Activated CD4-positive, alpha-beta T cell treated with anti-CD3 and anti-CD28 coated beads for 36 hours (primary cell): ENCODE measurements at regions of chr19 and their contacts with region 1.

Region 1: GRCh38 chr19:45584332-45585157 is at the start of gene OPA3:
- DNase-seq: peak; percentile 100
- ATAC-seq: peak; percentile 95
- H3K4me3 Mint-ChIP-seq: peak within 1 kb of the TSS; percentile 87
- H3K27ac Mint-ChIP-seq: peak within 1 kb of the TSS; percentile 93
- H3K4me1 Mint-ChIP-seq: peaks cover 22% of the 10 kb centered on the region
- H3K27me3 Mint-ChIP-seq: peaks cover 2% of the 10 kb centered on the region
- total RNA-seq, gene OPA3: 13.8 to 14.4 TPM

Region 2: GRCh38 chr19:45370410-45371204 is 213.9 kb before region 1 on chr19 and contains the start of gene ERCC2:
- CTCF ChIA-PET with region 1: no interaction called
- POLR2A ChIA-PET with region 1: no interaction called
- intact Hi-C with region 1: loop called in 1 of 2 experiments (anchors 1 kb)
- DNase-seq: peak; percentile 100
- ATAC-seq: peak; percentile 100
- H3K4me3 Mint-ChIP-seq: peak within 1 kb of the TSS; percentile 79
- H3K27ac Mint-ChIP-seq: peak within 1 kb of the TSS; percentile 97
- H3K4me1 Mint-ChIP-seq: peaks cover 8% of the 10 kb centered on the region
- H3K27me3 Mint-ChIP-seq: no peaks in the 10 kb centered on the region
- total RNA-seq, gene ERCC2: 27.5 to 30.4 TPM

Region 3: DNA sequence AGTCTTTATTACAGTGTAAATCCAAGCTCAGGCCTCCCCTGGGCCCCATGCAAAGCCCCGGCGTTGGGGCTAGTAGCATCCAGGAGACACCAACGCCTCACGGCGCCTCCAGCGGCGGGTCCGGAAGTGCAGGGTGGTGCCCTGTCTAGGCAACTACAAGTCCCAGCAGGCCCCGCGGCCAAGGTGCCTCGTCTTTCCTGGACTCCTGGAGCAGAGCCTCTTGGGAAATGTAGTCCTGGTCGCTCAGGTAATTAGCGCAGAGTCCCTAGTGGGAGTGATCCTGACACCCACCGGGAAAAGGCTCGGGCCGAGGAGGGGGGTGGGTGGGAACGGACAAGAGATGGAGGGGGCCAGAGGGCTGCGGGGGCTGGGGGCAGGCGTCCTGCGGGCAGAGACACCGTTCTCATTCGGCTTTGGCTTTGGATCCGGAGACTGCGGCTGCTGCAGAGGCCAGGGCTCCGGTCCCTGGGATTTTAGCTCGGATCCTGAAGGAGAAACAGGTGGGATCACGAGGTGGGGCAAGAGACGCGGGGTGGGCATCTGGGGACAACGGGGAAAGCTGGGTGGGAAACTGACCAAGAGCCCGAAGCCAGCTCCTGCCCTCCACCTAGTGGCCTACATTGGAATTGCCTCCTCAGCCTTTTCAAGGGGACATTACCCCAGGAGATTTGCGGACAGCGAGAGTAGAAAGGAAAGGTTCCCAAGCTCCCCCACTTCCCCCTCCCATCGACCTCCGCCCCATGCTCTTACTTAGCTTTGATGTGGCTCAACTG is 99.1 kb before region 1 on chr19:
- CTCF ChIA-PET with region 1: interaction called, 3 read pairs
- POLR2A ChIA-PET with region 1: no interaction called
- intact Hi-C with region 1: loop called in 1 of 2 experiments (anchors 1 kb)
- DNase-seq: peak; percentile 100
- ATAC-seq: peak; percentile 99
- H3K4me3 Mint-ChIP-seq: peak overlapping the region; percentile 83
- H3K27ac Mint-ChIP-seq: peak overlapping the region; percentile 91
- H3K4me1 Mint-ChIP-seq: peaks cover 13% of the 10 kb centered on the region
- H3K27me3 Mint-ChIP-seq: peaks cover 2% of the 10 kb centered on the region

Region 4: DNA sequence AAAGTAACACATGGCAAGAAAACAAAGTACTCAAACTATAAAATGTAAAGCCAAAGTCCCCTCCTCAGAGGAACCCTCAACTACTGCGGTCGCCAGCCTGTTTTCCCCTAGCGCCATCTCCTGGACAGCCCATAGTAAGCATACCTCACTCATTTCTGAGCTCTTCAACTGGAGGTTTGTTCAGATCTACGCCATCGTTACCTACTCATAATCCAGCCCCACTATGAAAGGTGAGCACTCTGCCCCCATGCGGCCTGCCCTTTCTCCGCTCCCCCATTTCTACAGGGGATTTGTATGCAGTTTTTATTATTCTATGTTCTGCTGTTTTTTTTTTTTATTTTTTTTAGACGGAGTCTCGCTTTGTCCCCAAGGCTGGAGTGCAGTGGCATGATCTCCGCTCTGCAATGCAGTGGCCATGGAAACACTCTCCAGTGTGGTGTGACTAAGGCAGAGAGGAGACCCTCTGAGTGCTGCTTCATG is 26.1 kb before region 1 on chr19:
- CTCF ChIA-PET with region 1: interaction called, 13 read pairs
- POLR2A ChIA-PET with region 1: interaction called, 3 read pairs
- intact Hi-C with region 1: loop called in 1 of 2 experiments (anchors 2 kb)
- DNase-seq: peak; percentile 87
- ATAC-seq: peak; percentile 99
- H3K4me3 Mint-ChIP-seq: no peak overlapping the region
- H3K27ac Mint-ChIP-seq: peak overlapping the region; percentile 5
- H3K4me1 Mint-ChIP-seq: peaks cover 25% of the 10 kb centered on the region
- H3K27me3 Mint-ChIP-seq: no peaks in the 10 kb centered on the region

Region 5: DNA sequence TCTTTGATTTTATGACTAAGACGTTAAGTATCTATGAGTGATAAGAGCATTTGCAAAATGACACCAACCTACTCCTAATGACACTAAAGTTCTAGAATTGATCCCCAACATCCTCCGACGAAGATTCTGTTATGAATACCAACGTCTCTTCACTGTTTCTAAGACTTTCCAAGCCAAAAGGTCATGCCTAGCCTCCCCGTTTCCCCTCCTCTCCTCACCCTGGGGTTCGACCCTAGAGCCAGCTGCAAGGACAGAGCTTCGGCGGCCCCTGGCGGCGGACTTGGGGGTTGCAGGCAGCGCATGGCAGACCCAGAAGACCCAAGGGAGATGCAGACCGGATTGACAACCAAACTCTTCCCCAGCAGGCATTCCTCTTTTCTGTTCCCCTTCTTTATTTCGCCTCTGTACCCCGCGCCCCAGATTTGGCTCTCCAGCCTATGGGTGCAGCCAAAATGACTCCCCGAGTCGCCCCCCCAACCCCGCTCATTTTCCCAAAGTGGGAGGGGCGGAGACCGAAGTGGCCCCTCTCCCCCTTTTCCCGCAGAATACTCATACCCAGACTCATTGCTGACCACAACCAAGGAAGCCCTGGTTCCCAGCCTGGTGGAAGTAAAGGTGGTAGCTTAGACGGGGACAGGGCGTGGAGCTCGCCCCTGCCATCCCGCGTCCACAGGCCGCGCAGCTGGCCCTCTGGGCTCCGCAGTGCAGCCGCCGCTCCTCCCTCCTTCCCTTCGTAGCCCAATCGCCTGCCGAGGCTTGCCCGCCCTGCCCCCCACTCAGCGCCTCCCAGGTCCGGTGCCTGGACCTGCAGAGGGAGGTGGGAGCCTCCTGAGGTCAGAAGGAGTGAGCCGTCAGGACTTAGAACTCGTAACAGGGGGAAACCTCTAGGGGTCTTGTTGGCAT is 58.7 kb after region 1 on chr19:
- CTCF ChIA-PET with region 1: interaction called, 11 read pairs
- POLR2A ChIA-PET with region 1: interaction called, 3 read pairs
- intact Hi-C with region 1: loop called (anchors 1 kb)
- DNase-seq: peak; percentile 97
- ATAC-seq: peak; percentile 54
- H3K4me3 Mint-ChIP-seq: peak overlapping the region; percentile 94
- H3K27ac Mint-ChIP-seq: peak overlapping the region; percentile 93
- H3K4me1 Mint-ChIP-seq: peaks cover 57% of the 10 kb centered on the region
- H3K27me3 Mint-ChIP-seq: no peaks in the 10 kb centered on the region

Region 6: DNA sequence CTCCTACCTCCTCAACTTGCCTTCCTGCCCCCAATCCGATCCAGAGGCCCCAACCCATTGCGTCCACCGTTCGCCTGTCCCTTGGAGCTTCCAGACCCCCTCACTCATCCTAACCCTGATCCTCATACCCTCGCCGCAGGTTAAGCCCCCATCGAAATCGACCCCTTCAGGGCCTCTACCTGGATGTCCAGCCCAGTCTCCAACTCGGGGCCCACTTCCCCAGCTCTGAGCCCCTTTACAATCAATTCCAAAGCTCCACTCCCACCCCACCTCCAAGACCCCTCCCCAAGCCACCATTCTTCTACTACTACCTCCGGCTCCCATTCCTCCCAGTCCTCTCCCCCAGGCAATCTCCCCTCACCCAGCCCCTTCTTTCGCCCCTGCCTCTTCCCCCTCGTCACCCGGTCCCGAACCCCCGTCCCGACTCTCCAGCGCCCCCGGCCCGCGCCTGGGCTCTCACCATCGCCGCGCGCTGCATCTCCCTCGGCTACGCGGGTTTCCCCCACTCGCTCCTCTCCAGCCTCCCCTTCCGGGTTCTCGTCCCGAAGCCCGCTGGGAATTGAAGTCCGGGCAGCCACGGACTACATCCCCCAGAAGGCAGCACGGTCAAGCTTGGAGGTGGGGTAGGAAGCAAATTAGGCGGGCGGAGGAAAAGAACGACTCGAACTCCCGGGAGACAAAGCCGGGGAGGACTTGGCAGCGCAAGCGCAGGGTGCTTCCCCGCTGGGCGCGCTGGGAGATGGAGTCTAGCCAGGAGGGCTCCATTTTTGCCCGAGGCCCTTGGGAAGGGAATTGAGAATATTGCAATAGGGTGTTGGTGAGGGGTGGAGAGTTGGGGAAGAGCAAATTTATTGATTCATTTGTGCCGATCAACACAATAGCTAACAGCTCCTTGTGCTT is 146.1 kb after region 1 on chr19 and contains the start of gene FBXO46:
- CTCF ChIA-PET with region 1: no interaction called
- POLR2A ChIA-PET with region 1: no interaction called
- intact Hi-C with region 1: loop called in 1 of 2 experiments (anchors 1 kb)
- DNase-seq: peak; percentile 97
- ATAC-seq: peak; percentile 99
- H3K4me3 Mint-ChIP-seq: peak within 1 kb of the TSS; percentile 88
- H3K27ac Mint-ChIP-seq: peak within 1 kb of the TSS; percentile 90
- H3K4me1 Mint-ChIP-seq: peaks cover 35% of the 10 kb centered on the region
- H3K27me3 Mint-ChIP-seq: no peaks in the 10 kb centered on the region
- total RNA-seq, gene FBXO46: 32.3 to 43.3 TPM

Region 7: GRCh38 chr19:45792470-45793177 is 208.1 kb after region 1 on chr19 and contains the start of gene DMWD:
- CTCF ChIA-PET with region 1: no interaction called
- POLR2A ChIA-PET with region 1: no interaction called
- intact Hi-C with region 1: loop called in 1 of 2 experiments (anchors 1 kb)
- DNase-seq: peak; percentile 100
- ATAC-seq: peak; percentile 93
- H3K4me3 Mint-ChIP-seq: peak within 1 kb of the TSS; percentile 95
- H3K27ac Mint-ChIP-seq: peak within 1 kb of the TSS; percentile 75
- H3K4me1 Mint-ChIP-seq: peaks cover 30% of the 10 kb centered on the region
- H3K27me3 Mint-ChIP-seq: peaks cover 16% of the 10 kb centered on the region
- total RNA-seq, gene DMWD: 31.1 to 35.1 TPM